ENCODE measurements at regions of chr11 and their contacts with region 1.

Region 1: DNA sequence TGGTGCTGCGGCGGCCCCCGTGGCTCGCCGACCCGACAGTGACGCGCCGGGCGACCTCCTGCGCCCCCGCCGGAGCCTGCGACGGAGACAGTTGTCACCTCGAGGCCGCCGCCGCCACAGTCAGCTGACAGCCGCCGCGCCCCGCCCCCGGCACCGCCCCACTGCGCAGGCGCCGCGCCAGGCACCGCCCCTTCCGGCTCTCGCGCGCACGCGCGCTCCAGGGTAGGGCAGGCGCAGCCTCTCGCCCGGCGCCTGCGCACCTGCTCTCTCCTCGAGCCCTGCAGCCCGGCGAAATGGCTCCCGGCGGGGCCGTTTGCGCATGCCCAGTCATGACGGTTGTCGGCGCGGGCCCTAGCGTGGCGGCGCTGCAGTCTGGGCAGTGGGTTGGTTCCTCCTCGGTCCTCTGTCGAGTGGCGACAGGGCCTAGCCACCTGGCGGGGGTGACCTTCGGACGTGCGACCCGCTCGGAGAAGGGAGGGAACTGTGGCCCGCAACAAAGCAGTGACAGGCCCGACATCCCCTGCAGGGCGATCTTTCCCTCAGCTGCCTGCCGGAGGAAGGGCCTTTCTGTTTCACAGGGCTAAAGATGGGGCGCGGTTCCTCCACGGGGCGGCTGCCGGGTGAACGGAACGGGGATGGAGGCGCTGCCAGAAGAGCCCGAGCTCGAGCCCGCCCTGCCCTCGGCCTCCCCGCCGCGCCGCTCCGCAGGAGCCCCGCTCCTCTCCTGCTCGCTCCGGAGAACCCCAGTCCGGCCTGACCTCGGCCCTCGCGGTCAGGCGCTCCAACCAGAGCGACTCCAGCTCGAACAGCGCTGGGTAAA is at the start of gene TOLLIP:
- DNase-seq: peak; percentile 98
- ATAC-seq: peak; percentile 92
- H3K4me3 Mint-ChIP-seq: peak within 1 kb of the TSS; percentile 76
- H3K27ac Mint-ChIP-seq: peak within 1 kb of the TSS; percentile 92
- H3K4me1 Mint-ChIP-seq: peaks cover 40% of the 10 kb centered on the region
- H3K27me3 Mint-ChIP-seq: no peaks in the 10 kb centered on the region
- total RNA-seq, gene TOLLIP: 29.6 to 45.8 TPM

Region 2: GRCh38 chr11:910589-911195 is 399.0 kb before region 1 on chr11 and contains the start of gene CHID1:
- CTCF ChIA-PET with region 1: no interaction called
- POLR2A ChIA-PET with region 1: no interaction called
- intact Hi-C with region 1: loop called in 1 of 2 experiments (anchors 1 kb)
- DNase-seq: peak; percentile 92
- ATAC-seq: peak; percentile 98
- H3K4me3 Mint-ChIP-seq: peak within 1 kb of the TSS; percentile 88
- H3K27ac Mint-ChIP-seq: peak within 1 kb of the TSS; percentile 88
- H3K4me1 Mint-ChIP-seq: peaks cover 24% of the 10 kb centered on the region
- H3K27me3 Mint-ChIP-seq: no peaks in the 10 kb centered on the region
- total RNA-seq, gene CHID1: 60.4 to 75.3 TPM

Region 3: GRCh38 chr11:1060824-1061616 is 248.7 kb before region 1 on chr11:
- CTCF ChIA-PET with region 1: no interaction called
- POLR2A ChIA-PET with region 1: no interaction called
- intact Hi-C with region 1: no loop called
- DNase-seq: no peak
- ATAC-seq: no peak
- H3K4me3 Mint-ChIP-seq: no peak overlapping the region
- H3K27ac Mint-ChIP-seq: no peak overlapping the region
- H3K4me1 Mint-ChIP-seq: peaks cover 18% of the 10 kb centered on the region
- H3K27me3 Mint-ChIP-seq: peaks cover 11% of the 10 kb centered on the region

Region 4: DNA sequence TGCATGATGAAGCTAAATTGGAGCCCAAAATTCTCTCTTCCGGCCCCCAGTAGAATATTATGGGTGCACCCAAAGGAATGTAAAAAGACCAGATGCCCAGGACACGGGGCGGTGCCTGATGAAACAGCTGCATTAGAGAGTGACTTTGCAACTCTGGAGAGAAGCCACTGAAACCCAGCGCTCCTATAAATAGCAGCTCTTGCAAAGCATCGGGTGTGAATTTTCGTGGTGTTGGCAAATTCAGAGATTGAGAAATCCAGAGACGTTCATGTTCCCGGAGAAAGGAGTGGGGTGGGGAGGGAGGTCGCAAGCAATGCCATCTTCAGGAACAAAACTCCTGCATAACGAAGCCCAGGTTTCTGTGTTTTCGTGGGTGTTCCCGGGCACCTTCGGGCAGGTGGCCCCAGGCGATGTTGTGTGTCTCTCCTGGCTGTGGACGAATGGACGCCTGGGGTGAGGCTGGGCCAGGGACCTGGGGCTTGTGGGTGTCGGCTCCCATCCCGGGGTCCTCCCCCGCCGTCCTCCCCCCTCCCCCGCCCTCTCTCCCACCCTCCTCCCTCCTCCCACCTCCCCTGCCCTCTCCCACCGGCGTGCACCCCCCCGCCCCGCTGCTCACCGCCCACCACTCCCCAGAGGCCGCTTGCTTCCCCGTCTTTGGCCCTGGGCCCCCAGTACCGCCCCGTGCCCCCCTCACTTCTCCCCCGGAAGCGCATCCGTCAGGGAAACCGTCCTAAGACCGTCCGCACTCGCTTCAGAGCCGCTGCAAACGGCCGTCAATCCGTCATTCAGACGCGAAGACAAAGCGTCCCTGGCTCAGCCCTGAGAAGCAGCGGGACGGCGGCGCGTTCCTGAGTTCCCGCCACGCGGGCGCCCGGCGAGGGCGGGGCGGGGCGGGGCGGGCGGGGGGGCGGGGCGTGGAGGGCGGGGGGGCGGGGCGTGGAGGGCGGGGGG is 26.4 kb after region 1 on chr11:
- CTCF ChIA-PET with region 1: no interaction called
- POLR2A ChIA-PET with region 1: no interaction called
- intact Hi-C with region 1: loop called (anchors 1 to 2 kb)
- DNase-seq: peak; percentile 78
- ATAC-seq: peak; percentile 76
- H3K4me3 Mint-ChIP-seq: peak overlapping the region; percentile 71
- H3K27ac Mint-ChIP-seq: peak overlapping the region; percentile 66
- H3K4me1 Mint-ChIP-seq: peaks cover 15% of the 10 kb centered on the region
- H3K27me3 Mint-ChIP-seq: peaks cover 3% of the 10 kb centered on the region

Region 5: DNA sequence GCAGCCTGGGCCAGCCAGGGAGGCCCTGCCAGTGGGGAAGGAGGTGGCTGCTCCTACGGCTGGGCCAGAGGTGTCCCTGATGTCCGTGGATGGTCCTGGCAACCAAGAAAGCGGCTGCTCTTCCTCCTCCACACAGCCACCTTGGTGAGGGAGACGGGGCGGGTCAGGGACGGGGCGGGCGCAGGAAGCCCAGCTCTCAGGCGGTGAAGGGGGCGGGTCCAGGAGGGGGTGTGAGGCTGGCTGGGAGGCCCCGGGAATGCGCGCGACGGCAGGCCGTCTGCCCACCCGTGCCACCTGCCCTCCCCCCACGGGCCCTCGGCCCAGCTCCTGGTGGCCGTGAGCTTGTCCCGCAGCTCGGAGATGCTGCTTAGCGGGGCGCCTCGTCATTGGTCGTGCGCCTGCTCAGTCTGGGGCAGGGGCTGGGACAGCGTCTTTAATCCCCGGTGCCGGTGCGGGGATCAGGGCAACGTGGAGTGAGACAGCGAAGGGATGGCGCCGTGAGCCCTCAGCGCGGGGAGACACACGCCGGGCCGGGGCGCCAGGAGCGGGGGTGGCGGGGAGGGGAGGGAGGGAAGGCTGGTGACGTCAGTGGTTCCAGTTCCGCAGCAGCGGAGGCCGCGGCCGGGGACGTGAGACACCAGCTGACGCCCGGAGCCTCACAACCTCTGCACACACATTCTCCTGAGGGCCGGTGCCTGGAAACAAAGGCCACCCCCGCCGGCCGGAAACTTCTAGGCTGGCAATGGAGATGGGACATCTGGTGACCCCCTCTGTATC is 73.3 kb after region 1 on chr11:
- CTCF ChIA-PET with region 1: interaction called, 3 read pairs
- POLR2A ChIA-PET with region 1: no interaction called
- intact Hi-C with region 1: loop called (anchors 1 to 5 kb)
- DNase-seq: peak; percentile 92
- ATAC-seq: peak; percentile 82
- H3K4me3 Mint-ChIP-seq: peak overlapping the region; percentile 66
- H3K27ac Mint-ChIP-seq: peak overlapping the region; percentile 83
- H3K4me1 Mint-ChIP-seq: peaks cover 16% of the 10 kb centered on the region
- H3K27me3 Mint-ChIP-seq: no peaks in the 10 kb centered on the region

Region 6: GRCh38 chr11:1389103-1389931 is 79.6 kb after region 1 on chr11:
- CTCF ChIA-PET with region 1: no interaction called
- POLR2A ChIA-PET with region 1: interaction called, 3 read pairs
- intact Hi-C with region 1: loop called (anchors 1 to 5 kb)
- DNase-seq: peak; percentile 99
- ATAC-seq: peak; percentile 99
- H3K4me3 Mint-ChIP-seq: peak overlapping the region; percentile 53
- H3K27ac Mint-ChIP-seq: no peak overlapping the region
- H3K4me1 Mint-ChIP-seq: peaks cover 9% of the 10 kb centered on the region
- H3K27me3 Mint-ChIP-seq: peaks cover 25% of the 10 kb centered on the region

Region 7: DNA sequence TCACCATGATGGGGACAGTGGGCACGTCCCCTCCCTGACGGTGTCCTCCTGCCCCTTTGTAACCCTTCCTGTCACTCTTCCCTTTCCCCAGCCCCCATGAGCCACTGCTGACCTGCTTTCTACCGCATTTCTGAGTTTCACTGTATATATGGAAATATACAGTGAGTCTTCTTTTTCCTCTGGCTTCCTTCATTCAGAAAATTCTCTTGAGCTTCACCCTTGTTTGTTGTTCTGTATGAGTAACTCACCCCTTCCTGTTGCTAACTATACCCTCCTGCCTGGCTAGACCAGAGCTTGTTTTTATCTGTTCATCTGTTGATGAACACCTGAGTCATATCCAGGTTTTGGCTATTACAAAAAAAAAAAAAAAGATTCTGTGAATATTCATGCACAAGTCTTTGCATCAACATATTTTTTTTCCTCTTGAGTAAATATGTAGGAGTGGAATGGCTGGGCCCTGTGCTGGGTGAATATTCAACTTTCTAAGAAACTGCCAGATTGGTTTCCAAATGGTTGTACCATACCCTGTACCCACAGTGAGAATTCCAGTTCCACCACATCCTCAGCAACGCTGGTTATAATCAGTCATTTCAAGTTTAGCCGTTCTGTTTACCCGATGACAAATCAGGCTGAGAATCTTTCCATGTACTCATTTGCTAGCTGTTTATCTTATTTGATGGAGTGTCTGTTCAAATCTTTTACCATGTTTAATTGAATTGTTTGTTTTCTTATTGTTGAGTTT is 767.5 kb after region 1 on chr11:
- CTCF ChIA-PET with region 1: no interaction called
- POLR2A ChIA-PET with region 1: no interaction called
- intact Hi-C with region 1: loop called in 1 of 2 experiments (anchors 5 kb)
- DNase-seq: peak; percentile 77
- ATAC-seq: peak; percentile 93
- H3K4me3 Mint-ChIP-seq: no peak overlapping the region
- H3K27ac Mint-ChIP-seq: peak overlapping the region; percentile 84
- H3K4me1 Mint-ChIP-seq: peaks cover 21% of the 10 kb centered on the region
- H3K27me3 Mint-ChIP-seq: peaks cover 30% of the 10 kb centered on the region

Measured in activated CD4-positive, alpha-beta T cell treated with anti-CD3 and anti-CD28 coated beads for 36 hours (primary cell).